Gastrocnemius medialis (tissue), 4 donors: ENCODE measurements at regions of chr19 and their contacts with region 1.

Region 1: GRCh38 chr19:28878862-28879566 is 333.9 kb downstream of the UQCRFS1 start:
- DNase-seq: peak; percentile 19 to 32
- ATAC-seq: peak; percentile 56 to 61
- H3K4me3 ChIP-seq: no peak overlapping the region
- H3K27ac ChIP-seq: no peak overlapping the region
- H3K4me1 ChIP-seq: peaks cover 0 to 3% of the 10 kb centered on the region in 2 donors
- H3K27me3 ChIP-seq: no peaks in the 10 kb centered on the region
- CTCF ChIP-seq: peak; percentile 18 to 68 (median 60)
- POLR2A ChIP-seq: no peak

Region 2: GRCh38 chr19:28737021-28737895 is 141.8 kb before region 1 on chr19:
- in situ Hi-C with region 1: no loop called
- intact Hi-C with region 1: loop called (anchors 2 kb)
- DNase-seq: no peak
- ATAC-seq: peak in 1 of 2 donors; percentile 39
- H3K4me3 ChIP-seq: peak overlapping the region in 1 of 4 donors; percentile 6
- H3K27ac ChIP-seq: no peak overlapping the region
- H3K4me1 ChIP-seq: peaks cover 3 to 6% of the 10 kb centered on the region in 2 donors
- H3K27me3 ChIP-seq: no peaks in the 10 kb centered on the region
- CTCF ChIP-seq: peak in 3 of 5 experiments; percentile 8 to 40 (median 39)
- POLR2A ChIP-seq: no peak

Region 3: GRCh38 chr19:28847468-28847867 is 31.5 kb before region 1 on chr19:
- in situ Hi-C with region 1: no loop called
- intact Hi-C with region 1: no loop called
- DNase-seq: no peak
- ATAC-seq: no peak
- H3K4me3 ChIP-seq: no peak overlapping the region
- H3K27ac ChIP-seq: no peak overlapping the region
- H3K4me1 ChIP-seq: no peaks in the 10 kb centered on the region
- H3K27me3 ChIP-seq: no peaks in the 10 kb centered on the region
- CTCF ChIP-seq: no peak
- POLR2A ChIP-seq: no peak

Region 4: GRCh38 chr19:28961772-28962500 is 82.9 kb after region 1 on chr19:
- in situ Hi-C with region 1: no loop called
- intact Hi-C with region 1: no loop called
- DNase-seq: no peak
- ATAC-seq: no peak
- H3K4me3 ChIP-seq: no peak overlapping the region
- H3K27ac ChIP-seq: no peak overlapping the region
- H3K4me1 ChIP-seq: peaks cover 0 to under 1% of the 10 kb centered on the region in 2 donors
- H3K27me3 ChIP-seq: no peaks in the 10 kb centered on the region
- CTCF ChIP-seq: no peak
- POLR2A ChIP-seq: no peak

Region 5: DNA sequence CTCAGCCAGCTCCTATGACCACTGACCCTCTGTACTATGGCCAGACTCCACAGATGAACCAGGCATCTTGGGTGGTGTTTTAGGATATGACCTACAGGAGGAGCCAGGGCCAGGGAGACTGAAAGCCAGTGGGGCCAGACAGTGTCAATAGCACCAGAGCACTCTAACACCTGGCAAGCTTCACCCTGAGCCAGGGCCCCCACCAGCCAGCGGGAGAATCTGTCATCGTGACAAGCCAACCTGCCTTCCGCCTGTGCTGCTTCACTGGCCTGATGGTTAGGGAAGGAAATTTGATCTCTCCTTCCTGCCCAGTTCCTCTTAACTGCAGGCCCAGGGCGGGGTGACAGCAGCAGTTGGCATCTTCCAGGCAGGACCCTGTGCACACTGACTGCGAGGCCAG is 111.5 kb after region 1 on chr19:
- in situ Hi-C with region 1: no loop called
- intact Hi-C with region 1: no loop called
- DNase-seq: no peak
- ATAC-seq: no peak
- H3K4me3 ChIP-seq: no peak overlapping the region
- H3K27ac ChIP-seq: no peak overlapping the region
- H3K4me1 ChIP-seq: no peaks in the 10 kb centered on the region
- H3K27me3 ChIP-seq: no peaks in the 10 kb centered on the region
- CTCF ChIP-seq: no peak
- POLR2A ChIP-seq: no peak